Cardiac septum (tissue), 1 donor: ENCODE measurements at regions of chr1 and their contacts with region 1.

Region 1: GRCh38 chr1:154404984-154405761 is at the start of gene IL6R:
- DNase-seq: peak; percentile 98
- total RNA-seq, gene IL6R: 5.2 TPM

Region 2: DNA sequence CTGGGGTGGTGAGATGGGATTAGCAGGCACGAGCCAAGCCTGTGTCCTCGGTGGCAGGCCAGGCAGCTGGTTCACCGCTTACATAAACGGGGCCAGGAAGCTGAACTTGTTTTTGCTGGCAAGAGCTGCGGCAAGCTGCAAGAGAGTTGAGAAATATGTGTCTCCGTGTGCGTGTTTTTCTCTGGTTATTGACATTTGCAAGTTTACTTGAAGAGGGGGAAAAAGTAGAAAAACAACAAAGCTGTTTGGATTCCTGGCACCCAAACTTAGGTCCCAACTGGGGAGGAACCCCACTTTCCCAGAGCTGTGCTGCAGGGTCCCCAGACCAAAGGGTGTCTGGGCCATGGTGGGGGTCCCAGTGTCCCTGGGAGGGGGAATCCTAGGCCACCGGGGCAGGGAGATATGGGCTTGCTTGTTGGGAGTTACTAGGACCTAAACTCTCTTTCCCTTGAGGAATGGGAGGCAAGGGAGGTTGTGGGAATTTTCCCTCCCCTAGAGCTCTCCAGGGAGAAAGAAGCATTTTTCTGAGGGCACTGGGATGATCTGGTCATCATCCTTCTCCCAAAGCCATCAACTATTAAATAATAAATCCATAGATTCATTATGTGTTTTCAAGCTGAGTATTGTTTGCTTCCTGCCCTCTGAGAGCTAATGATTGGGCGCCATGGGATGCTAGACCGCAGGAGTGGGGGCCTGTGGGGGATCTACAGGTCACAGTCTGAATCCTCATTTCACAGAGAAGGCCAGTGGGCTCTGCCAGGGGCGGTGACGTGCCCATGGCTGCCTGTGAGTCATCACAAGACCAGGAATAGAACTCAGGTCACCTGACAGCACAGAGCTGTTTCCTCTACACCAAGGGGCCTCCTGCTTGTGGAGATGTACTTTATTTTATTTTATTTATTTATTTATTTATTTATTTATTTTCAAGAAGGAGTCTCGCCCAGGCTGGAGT is 14.7 kb after region 1 on chr1:
- intact Hi-C with region 1: loop called (anchors 1 kb)
- DNase-seq: peak; percentile 92

Region 3: GRCh38 chr1:154434346-154435085 is 29.3 kb after region 1 on chr1:
- intact Hi-C with region 1: loop called (anchors 1 kb)
- DNase-seq: no peak

Region 4: GRCh38 chr1:154463512-154463990 is 58.4 kb after region 1 on chr1:
- intact Hi-C with region 1: loop called (anchors 5 kb)
- DNase-seq: peak; percentile 56

Region 5: DNA sequence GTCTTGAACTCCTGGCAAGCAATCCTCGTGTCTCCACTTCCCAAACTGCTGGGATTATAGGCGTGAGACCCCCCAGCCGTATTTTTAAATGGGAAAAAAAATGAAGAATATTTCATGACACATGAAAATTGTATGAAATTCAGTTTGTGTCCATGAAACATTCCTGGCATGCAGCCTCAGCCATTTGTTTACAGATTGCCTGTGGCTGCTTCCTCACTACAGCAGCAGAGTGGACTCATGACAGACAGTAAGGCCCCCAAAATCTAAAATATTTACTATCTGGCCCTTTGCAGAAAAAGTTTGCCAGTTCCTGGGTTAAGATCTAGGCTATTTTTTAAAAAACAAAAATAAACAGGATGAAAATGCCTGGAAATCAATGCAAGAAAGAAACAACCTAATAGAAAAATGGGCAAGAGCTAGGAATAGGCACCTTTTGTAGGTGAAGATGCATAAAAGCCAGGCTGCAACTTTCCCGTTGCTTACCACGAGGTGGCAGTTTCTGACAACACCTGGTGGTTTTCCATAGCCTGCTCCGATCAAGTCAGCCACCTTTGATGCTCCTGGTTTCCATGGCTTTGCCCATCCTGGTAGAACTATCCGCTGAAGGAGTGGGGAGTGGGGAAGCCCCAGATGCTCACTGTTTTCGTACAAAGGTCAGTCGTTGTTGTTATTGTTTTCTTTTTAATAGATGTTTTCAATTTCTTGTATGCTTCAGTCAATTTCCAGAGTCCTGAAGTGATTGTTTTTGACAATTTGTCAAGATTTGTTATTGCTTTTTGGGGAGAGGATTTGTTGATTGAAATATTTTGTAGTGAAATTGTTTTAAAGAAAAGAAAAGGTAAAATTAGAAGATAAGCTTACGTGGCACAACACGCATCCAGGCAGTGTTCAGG is 129.0 kb after region 1 on chr1:
- intact Hi-C with region 1: no loop called
- DNase-seq: no peak